Dendritic cell treated with granulocyte-macrophage colony-stimulating factor and Interleukin-4, amounts not matched to agents 40 ng/mL and 50 ng/mL, for 4 days (primary cell): ENCODE measurements at regions of chr7 and their contacts with region 1.

Region 1: DNA sequence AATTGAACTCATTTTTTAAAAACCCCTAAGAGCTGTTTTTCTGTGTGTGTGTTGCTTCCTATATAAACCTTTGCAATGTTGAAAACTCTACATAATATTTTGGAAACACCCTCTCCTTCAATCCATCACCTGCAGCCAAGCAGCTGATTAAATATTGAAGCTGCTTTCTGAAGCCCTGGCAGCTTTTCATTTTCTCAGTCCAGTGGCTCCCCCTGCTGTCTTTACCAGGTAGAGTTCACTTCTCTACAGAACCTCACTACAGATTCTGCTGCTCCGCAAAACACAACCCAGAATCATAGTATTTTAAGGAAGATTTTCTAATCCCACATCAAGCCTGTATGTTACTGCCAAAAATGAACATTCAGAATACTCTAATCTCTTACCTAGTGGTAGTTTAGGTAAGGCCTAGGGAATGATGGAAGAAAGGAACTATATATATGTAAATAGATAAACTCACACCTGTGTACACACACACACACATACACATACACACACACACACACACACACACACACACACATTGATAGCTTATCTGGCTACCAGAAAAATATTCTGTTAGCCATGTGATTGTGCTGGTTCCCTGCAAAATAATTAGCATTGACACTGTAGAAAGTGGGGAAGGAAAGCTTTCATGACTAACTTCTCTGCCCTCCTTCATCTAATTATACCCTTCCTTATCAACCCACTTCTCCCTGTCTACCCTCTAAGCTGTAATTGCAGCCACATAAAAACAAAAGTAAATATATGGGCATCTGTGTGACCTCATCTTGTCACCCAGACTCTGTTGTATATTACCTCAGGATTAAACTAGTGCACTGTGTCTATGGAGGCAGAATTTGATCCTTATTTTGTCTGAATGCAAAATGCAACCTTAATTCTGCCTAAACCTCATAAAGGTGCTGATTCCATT is 229.5 kb upstream of the FZD1 start:
- H3K4me3 Mint-ChIP-seq: no peak overlapping the region
- H3K27ac Mint-ChIP-seq: no peak overlapping the region
- H3K4me1 Mint-ChIP-seq: no peaks in the 10 kb centered on the region
- H3K27me3 Mint-ChIP-seq: no peaks in the 10 kb centered on the region

Region 2: DNA sequence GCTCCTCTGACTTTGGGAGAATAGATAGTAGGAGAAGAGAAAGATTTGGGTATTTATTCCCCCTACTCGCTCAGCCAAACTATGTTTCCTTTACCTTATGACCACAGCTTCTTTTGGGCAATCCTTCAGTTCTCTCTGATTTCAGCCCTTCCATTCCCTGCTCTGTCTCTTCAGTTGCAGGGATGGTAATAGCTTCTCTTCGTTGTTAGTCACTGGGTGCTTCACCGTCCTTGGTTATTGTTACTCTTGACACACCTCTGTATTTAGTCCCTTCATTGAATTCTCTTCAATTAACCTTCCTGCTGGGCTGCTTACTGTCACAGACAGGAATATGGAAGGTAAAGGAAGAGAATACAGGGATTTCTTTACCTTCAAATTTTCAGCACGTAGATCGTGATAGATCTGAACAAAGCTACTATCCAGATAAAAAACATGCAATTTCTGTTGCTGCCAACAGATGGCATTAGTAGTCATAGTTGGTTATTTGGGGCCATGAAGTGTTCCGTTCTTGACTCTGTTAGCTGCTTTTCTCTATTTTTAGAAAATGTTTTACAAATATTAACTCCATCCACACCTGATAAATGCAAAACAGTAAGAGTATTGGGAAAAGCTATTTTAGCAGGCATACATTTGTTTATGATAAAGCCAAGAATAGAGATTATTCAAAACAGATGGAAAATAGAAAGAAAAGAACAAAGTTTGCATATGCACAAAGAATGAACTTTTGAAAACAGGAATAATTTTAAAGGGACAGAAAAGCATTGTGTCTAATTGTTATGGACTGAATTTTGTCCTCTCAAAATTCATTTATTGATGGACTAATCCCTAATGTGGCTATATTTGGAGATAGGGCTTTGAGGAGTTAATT is 579.3 kb before region 1 on chr7:
- intact Hi-C with region 1: loop called (anchors 1 kb)
- H3K4me3 Mint-ChIP-seq: no peak overlapping the region
- H3K27ac Mint-ChIP-seq: no peak overlapping the region
- H3K4me1 Mint-ChIP-seq: peaks cover 5% of the 10 kb centered on the region
- H3K27me3 Mint-ChIP-seq: peaks cover 1% of the 10 kb centered on the region

Region 3: GRCh38 chr7:90552521-90552920 is 482.2 kb before region 1 on chr7:
- intact Hi-C with region 1: loop called (anchors 10 kb)
- H3K4me3 Mint-ChIP-seq: no peak overlapping the region
- H3K27ac Mint-ChIP-seq: no peak overlapping the region
- H3K4me1 Mint-ChIP-seq: no peaks in the 10 kb centered on the region
- H3K27me3 Mint-ChIP-seq: peaks cover 16% of the 10 kb centered on the region